GM10248 (cell line): ENCODE measurements at regions of chr13 and their contacts with region 1.

Region 1: GRCh38 chr13:77715233-77715891 is 17.9 kb downstream of the SLAIN1 start:
- DNase-seq: no peak
- CTCF ChIP-seq: no peak

Region 2: DNA sequence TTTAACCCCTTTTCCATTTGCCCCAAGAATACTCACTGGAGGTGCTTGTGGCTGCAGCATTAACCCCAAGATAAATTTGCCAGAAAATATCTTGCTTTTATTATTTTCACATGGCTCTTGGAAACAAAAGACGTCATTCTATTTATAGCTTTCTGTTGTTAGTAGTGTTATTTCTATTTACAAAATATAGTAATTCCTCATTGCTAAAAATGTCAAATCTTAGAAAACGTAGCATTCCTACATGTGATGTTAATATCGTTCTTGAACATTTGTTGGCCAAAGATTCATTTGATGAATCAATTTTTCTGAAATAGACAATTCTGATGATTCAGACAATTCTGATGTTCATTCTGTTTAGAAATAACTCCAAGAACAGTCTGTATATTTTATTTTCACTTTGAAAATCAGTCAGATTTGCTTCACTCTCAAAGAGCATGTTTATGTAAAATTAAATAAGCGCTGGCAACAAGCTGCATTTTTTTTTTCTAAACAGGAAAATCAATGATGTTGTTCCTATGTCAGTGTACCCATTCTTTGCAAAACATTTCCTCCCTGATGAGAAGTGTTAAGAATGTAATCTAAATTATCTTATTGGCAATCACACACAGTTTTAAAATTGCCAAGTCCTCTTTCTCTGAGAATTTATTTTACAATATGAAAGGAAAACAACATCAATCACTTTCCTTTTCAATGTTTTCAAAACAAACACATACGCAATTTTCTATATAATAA is 1163.2 kb before region 1 on chr13:
- CTCF ChIA-PET with region 1: no interaction called
- POLR2A ChIA-PET with region 1: no interaction called
- DNase-seq: no peak
- CTCF ChIP-seq: no peak

Region 3: DNA sequence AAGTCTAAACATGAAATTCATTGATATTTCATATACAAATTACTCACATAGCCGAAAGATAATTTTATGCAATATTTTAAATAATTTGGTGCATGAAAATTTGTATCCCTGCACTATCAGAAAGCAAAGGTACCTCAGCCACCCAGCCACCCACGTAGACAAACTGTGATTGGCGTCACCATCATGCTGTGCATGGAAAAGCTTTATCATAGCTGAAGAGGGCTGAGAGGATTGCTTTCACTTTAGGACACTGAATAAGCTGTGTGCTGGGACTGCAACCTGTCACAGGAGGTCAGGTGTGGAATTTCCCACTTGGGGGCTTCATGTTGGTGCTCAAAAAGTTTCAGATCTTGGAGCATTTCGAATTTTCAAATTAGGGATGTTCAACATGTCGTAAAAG is 484.8 kb before region 1 on chr13:
- CTCF ChIA-PET with region 1: no interaction called
- POLR2A ChIA-PET with region 1: no interaction called
- DNase-seq: no peak
- CTCF ChIP-seq: no peak

Region 4: GRCh38 chr13:77697217-77698103 is 17.9 kb before region 1 on chr13 and contains the start of gene SLAIN1:
- CTCF ChIA-PET with region 1: interaction called, 10 read pairs
- POLR2A ChIA-PET with region 1: no interaction called
- DNase-seq: peak; percentile 95
- CTCF ChIP-seq: no peak

Region 5: DNA sequence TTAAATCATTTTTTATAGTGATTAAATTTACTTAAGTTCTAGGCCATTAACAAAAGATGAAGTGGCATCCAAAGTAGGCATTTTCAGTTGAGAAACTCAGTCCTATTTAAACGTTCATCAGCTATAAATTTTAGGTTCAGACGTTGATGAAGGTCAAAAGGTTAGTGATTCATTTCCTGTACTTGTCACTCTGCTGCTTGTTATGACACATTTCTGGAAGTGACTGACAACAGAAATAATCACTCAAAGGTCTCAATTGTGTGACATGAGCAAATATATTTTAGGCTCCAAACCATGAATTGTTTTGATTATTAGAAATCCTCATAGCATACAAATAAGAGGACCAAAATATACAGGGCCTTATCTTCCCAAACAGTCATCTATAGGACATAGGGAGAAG is 213.5 kb after region 1 on chr13:
- CTCF ChIA-PET with region 1: no interaction called
- POLR2A ChIA-PET with region 1: no interaction called
- DNase-seq: peak; percentile 33
- CTCF ChIP-seq: no peak